Mammary epithelial cell (primary cell): ENCODE measurements at regions of chr10 and their contacts with region 1.

Region 1: GRCh38 chr10:23702977-23703414 is 264.1 kb downstream of the OTUD1 start:
- DNase-seq: peak; percentile 47
- H3K4me3 ChIP-seq: no peak overlapping the region
- H3K27ac ChIP-seq: no peak overlapping the region
- H3K4me1 ChIP-seq: no peaks in the 10 kb centered on the region
- H3K27me3 ChIP-seq: no peaks in the 10 kb centered on the region
- CTCF ChIP-seq: peak; percentile 76 to 84

Region 2: GRCh38 chr10:23413629-23414089 is 289.3 kb before region 1 on chr10:
- CTCF ChIA-PET with region 1: no interaction called
- dilution Hi-C with region 1: no loop called
- in situ Hi-C with region 1: no loop called
- intact Hi-C with region 1: no loop called
- DNase-seq: no peak
- H3K4me3 ChIP-seq: no peak overlapping the region
- H3K27ac ChIP-seq: no peak overlapping the region
- H3K4me1 ChIP-seq: no peaks in the 10 kb centered on the region
- H3K27me3 ChIP-seq: no peaks in the 10 kb centered on the region
- CTCF ChIP-seq: no peak

Region 3: GRCh38 chr10:23525406-23525805 is 177.6 kb before region 1 on chr10:
- CTCF ChIA-PET with region 1: no interaction called
- dilution Hi-C with region 1: no loop called
- in situ Hi-C with region 1: loop called in 1 of 2 experiments (anchors 25 kb)
- intact Hi-C with region 1: no loop called
- DNase-seq: peak; percentile 14
- H3K4me3 ChIP-seq: no peak overlapping the region
- H3K27ac ChIP-seq: no peak overlapping the region
- H3K4me1 ChIP-seq: no peaks in the 10 kb centered on the region
- H3K27me3 ChIP-seq: peaks cover 1% of the 10 kb centered on the region
- CTCF ChIP-seq: peak; percentile 34 to 66

Region 4: GRCh38 chr10:23535381-23535780 is 167.6 kb before region 1 on chr10:
- CTCF ChIA-PET with region 1: no interaction called
- dilution Hi-C with region 1: no loop called
- in situ Hi-C with region 1: loop called in 1 of 2 experiments (anchors 25 kb)
- intact Hi-C with region 1: loop called (anchors 2 kb)
- DNase-seq: no peak
- H3K4me3 ChIP-seq: no peak overlapping the region
- H3K27ac ChIP-seq: no peak overlapping the region
- H3K4me1 ChIP-seq: no peaks in the 10 kb centered on the region
- H3K27me3 ChIP-seq: no peaks in the 10 kb centered on the region
- CTCF ChIP-seq: peak; percentile 8 to 55

Region 5: DNA sequence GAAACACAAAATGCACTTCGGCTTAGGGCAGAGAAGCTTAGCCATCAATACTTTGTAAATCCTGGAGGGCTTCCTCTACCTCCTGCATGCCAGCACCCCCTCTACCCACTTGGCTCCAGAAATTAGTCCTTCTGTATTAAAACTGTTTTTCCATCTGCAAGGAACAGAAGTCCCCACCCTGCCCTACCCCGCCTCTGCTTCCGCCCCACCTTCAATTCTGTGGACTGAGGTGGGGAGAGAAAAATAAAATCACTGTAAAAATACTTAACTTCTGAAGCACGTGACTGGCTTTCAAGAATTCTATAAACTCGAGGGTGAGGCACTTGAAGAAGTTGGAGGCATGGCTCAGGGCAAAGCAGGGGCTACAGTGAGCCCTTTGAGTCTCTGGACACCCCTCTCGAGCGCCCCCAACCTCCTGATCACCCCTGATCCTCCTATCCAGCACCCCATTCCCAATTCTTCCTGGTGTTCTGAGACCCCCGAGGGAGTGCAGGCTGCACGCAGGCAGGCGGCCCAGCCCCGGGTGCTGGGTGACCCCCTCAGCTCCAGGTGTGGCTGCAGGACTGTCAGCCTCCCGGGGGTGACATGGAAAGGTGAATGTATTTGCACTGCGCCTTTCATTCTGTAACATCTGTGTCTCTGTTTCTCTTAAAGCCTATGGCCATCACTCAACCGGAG is 498.6 kb after region 1 on chr10:
- CTCF ChIA-PET with region 1: no interaction called
- dilution Hi-C with region 1: no loop called
- in situ Hi-C with region 1: no loop called
- intact Hi-C with region 1: loop called (anchors 10 kb)
- DNase-seq: no peak
- H3K4me3 ChIP-seq: no peak overlapping the region
- H3K27ac ChIP-seq: no peak overlapping the region
- H3K4me1 ChIP-seq: no peaks in the 10 kb centered on the region
- H3K27me3 ChIP-seq: no peaks in the 10 kb centered on the region
- CTCF ChIP-seq: no peak